Caco-2 (cell line): ENCODE measurements at regions of chr1 and their contacts with region 1.

Region 1: GRCh38 chr1:160951443-160952128 is 3.0 kb downstream of the ITLN2 start:
- DNase-seq: peak; percentile 75 to 78
- H3K4me3 ChIP-seq: no peak overlapping the region
- H3K4me3 Mint-ChIP-seq: no peak overlapping the region
- H3K27ac Mint-ChIP-seq: no peak overlapping the region
- H3K4me1 ChIP-seq: peaks cover 47% of the 10 kb centered on the region
- H3K4me1 Mint-ChIP-seq: peaks cover 42% of the 10 kb centered on the region
- H3K27me3 ChIP-seq: no peaks in the 10 kb centered on the region
- H3K27me3 Mint-ChIP-seq: no peaks in the 10 kb centered on the region
- CTCF ChIP-seq: peak; percentile 60 to 88

Region 2: DNA sequence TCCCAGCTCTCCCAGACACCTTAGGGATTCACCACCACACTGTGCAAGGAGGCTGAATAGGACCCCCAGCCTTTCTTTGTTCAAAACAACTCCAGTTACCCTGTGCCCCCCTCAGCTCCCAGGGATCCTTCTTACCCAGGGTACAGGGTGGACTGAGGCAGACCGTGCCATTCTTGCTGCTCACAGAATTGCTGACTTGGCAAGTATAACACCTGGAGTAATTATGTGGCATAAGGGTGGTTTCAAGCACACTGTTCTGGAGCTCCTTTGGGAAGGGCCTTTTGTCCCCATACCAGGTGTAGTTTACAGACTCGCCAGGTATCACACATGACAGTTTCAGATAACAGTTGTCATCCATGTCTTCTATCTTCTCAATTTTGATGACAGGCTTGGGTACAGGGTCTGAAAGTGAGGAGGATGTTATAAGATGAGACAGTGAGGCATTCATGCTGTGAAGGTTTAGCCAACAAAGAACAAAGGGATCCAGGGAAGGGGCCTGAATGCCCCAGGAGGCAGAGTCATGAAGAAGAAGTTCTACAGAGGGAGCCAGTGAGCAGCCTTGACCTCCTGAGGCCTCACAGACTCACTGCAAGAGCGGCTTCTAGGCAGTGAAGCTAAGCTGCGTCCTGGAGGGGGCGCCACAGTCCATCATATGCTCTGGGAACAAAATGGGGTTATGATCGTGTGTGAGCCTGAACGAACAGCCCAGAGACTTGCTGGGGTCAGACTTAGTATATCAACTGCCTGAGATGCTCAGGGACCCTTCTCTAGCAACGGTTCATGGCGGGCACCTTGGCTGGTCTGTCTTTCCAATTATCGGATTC is 270.3 kb before region 1 on chr1:
- CTCF ChIA-PET with region 1: no interaction called
- POLR2A ChIA-PET with region 1: no interaction called
- intact Hi-C with region 1: loop called (anchors 1 kb)
- DNase-seq: peak; percentile 62 to 74
- H3K4me3 ChIP-seq: no peak overlapping the region
- H3K4me3 Mint-ChIP-seq: no peak overlapping the region
- H3K27ac Mint-ChIP-seq: no peak overlapping the region
- H3K4me1 ChIP-seq: no peaks in the 10 kb centered on the region
- H3K4me1 Mint-ChIP-seq: peaks cover 6% of the 10 kb centered on the region
- H3K27me3 ChIP-seq: no peaks in the 10 kb centered on the region
- H3K27me3 Mint-ChIP-seq: no peaks in the 10 kb centered on the region
- CTCF ChIP-seq: peak; percentile 58 to 61

Region 3: DNA sequence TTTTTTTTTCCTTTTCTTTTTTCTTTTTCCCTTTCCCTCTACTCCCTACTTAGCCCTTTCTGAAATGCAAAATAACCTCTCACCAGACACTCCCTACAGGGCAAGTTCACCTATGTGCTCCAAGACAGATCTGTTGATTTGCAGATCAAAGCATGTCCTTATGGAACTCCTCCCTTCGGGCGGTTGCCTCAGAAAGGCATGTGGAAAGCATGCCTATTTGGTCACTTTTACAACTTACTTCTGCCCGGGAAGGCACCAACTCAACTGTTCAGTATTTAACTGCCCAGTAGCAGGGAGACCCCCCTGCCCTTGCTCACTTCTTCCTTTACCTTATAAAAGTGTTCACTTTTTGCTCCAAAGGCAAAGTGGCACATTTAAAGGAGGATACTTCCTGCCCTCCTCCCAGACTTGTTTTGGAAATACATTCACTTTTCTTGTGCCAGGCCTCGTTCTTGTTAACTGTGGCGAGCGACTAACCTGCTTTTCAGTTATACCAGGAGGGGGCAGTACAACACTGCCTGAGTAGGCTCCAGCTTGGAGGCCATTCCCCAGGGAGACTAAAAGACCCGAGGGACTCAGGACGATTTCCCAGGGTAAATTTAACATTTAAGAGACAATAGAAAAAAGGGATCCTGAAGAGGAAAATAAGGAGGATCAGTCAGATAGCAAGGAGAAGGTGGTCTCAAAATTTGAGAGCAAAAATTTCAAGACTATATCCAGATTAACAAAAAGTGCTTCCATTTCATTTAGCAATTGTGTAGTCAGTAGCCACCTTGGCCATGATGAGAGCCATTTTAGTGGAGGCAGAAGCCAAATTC is 224.9 kb before region 1 on chr1:
- CTCF ChIA-PET with region 1: interaction called, 4 read pairs
- POLR2A ChIA-PET with region 1: no interaction called
- intact Hi-C with region 1: loop called (anchors 1 kb)
- DNase-seq: peak; percentile 73
- H3K4me3 ChIP-seq: no peak overlapping the region
- H3K4me3 Mint-ChIP-seq: no peak overlapping the region
- H3K27ac Mint-ChIP-seq: no peak overlapping the region
- H3K4me1 ChIP-seq: peaks cover 12% of the 10 kb centered on the region
- H3K4me1 Mint-ChIP-seq: no peaks in the 10 kb centered on the region
- H3K27me3 ChIP-seq: no peaks in the 10 kb centered on the region
- H3K27me3 Mint-ChIP-seq: no peaks in the 10 kb centered on the region
- CTCF ChIP-seq: peak; percentile 74 to 79

Region 4: DNA sequence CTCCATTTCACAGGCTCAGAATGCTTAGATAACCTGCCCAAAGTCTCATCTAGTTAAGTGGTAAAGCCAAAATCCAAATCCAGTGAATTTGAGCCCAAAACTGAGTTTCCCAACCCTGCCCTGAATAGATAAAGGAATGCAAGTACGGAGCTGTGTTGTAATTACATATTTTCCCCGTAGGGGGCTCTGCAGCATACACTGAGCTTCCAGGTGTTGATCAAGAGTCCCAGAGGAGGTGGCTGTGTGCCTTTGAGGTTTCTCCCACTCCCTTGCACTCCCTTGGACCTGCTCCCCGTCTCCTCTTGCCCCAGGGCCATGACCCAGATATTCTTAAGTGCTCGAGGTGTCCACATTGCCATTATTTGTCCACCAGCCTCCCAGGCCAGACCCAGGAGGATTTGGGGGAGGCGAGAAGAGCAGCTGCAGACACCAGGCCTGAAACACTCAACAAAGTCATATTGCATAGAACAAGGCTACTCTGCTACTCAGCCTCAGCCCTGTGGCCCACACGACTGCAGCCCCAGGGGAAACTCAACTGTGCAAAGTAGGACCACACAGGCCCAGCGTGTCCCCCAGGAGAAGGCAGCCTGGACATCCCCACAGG is 174.0 kb before region 1 on chr1:
- CTCF ChIA-PET with region 1: interaction called, 4 read pairs
- POLR2A ChIA-PET with region 1: no interaction called
- intact Hi-C with region 1: loop called (anchors 2 kb)
- DNase-seq: peak; percentile 56 to 64
- H3K4me3 ChIP-seq: no peak overlapping the region
- H3K4me3 Mint-ChIP-seq: no peak overlapping the region
- H3K27ac Mint-ChIP-seq: no peak overlapping the region
- H3K4me1 ChIP-seq: peaks cover 20% of the 10 kb centered on the region
- H3K4me1 Mint-ChIP-seq: peaks cover 14% of the 10 kb centered on the region
- H3K27me3 ChIP-seq: no peaks in the 10 kb centered on the region
- H3K27me3 Mint-ChIP-seq: no peaks in the 10 kb centered on the region
- CTCF ChIP-seq: peak; percentile 55 to 70

Region 5: GRCh38 chr1:160855181-160855981 is 96.2 kb before region 1 on chr1:
- CTCF ChIA-PET with region 1: no interaction called
- POLR2A ChIA-PET with region 1: no interaction called
- intact Hi-C with region 1: no loop called
- DNase-seq: no peak
- H3K4me3 ChIP-seq: no peak overlapping the region
- H3K4me3 Mint-ChIP-seq: no peak overlapping the region
- H3K27ac Mint-ChIP-seq: no peak overlapping the region
- H3K4me1 ChIP-seq: 0 out of 2 replicates have a peak, but pooled peaks cover 3% of the 10 kb centered on the region
- H3K4me1 Mint-ChIP-seq: no peaks in the 10 kb centered on the region
- H3K27me3 ChIP-seq: no peaks in the 10 kb centered on the region
- H3K27me3 Mint-ChIP-seq: no peaks in the 10 kb centered on the region
- CTCF ChIP-seq: no peak

Region 6: DNA sequence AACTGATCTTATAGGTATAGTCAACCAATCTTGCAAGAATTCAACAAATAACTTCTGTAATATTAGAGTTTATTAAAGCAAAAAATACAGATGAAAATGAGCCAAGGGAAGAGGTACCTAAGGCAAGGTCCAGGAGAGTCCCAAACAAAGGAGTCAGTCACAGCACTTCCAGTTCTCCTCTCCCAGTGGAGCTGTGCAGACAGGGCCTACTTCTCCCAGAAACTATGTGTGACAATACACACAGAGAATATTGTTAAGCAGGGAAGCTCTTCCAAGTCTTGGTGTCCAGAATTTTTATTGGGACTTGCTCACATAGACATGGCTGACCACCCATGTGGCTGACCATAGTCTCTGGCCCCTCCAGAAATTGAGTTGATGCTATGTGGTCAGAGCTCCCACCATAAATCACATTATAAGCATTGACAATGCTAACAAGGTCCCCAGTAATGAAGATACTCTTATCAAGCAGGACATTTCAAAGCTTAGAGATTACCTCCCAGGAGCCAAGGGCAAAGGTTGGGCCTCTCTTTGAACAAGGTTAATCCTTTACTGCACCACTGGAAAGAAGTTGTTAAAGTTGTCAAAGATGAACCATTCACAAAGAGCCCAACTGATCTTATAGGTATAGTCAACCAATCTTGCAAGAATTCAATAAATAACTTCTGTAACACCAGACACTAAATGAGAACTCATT is 85.4 kb before region 1 on chr1:
- CTCF ChIA-PET with region 1: interaction called, 6 read pairs
- POLR2A ChIA-PET with region 1: no interaction called
- intact Hi-C with region 1: loop called (anchors 1 kb)
- DNase-seq: peak; percentile 64 to 81
- H3K4me3 ChIP-seq: no peak overlapping the region
- H3K4me3 Mint-ChIP-seq: peak overlapping the region; percentile 25
- H3K27ac Mint-ChIP-seq: peak overlapping the region; percentile 55
- H3K4me1 ChIP-seq: peaks cover 46% of the 10 kb centered on the region
- H3K4me1 Mint-ChIP-seq: peaks cover 41% of the 10 kb centered on the region
- H3K27me3 ChIP-seq: no peaks in the 10 kb centered on the region
- H3K27me3 Mint-ChIP-seq: no peaks in the 10 kb centered on the region
- CTCF ChIP-seq: no peak

Region 7: DNA sequence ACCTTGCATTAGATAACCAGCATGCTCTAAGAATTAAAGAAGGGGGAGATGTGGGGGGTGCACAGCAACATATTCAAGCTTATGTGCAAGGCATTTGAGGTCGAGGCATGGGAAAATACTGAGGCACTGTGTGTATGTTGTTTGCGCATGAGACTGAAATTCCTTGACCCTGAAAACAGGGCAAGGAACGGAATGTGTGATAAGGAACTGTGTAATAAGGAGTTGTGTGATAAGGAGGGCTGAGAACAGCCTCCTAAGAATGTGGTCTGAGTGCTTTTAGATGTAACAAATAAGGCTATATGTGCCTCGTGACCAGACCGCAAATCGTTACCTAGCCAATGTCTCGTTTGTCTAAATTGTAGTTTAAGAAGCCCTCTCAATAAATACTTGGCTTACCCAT is 40.1 kb before region 1 on chr1:
- CTCF ChIA-PET with region 1: interaction called, 5 read pairs
- POLR2A ChIA-PET with region 1: no interaction called
- intact Hi-C with region 1: loop called (anchors 1 kb)
- DNase-seq: peak; percentile 72 to 88
- H3K4me3 ChIP-seq: no peak overlapping the region
- H3K4me3 Mint-ChIP-seq: peak overlapping the region; percentile 4
- H3K27ac Mint-ChIP-seq: peak overlapping the region; percentile 54
- H3K4me1 ChIP-seq: peaks cover 28% of the 10 kb centered on the region
- H3K4me1 Mint-ChIP-seq: peaks cover 13% of the 10 kb centered on the region
- H3K27me3 ChIP-seq: no peaks in the 10 kb centered on the region
- H3K27me3 Mint-ChIP-seq: no peaks in the 10 kb centered on the region
- CTCF ChIP-seq: no peak